Posterior cingulate gyrus (tissue), 11 donors: ENCODE measurements at regions of chr2 and their contacts with region 1.

Region 1: DNA sequence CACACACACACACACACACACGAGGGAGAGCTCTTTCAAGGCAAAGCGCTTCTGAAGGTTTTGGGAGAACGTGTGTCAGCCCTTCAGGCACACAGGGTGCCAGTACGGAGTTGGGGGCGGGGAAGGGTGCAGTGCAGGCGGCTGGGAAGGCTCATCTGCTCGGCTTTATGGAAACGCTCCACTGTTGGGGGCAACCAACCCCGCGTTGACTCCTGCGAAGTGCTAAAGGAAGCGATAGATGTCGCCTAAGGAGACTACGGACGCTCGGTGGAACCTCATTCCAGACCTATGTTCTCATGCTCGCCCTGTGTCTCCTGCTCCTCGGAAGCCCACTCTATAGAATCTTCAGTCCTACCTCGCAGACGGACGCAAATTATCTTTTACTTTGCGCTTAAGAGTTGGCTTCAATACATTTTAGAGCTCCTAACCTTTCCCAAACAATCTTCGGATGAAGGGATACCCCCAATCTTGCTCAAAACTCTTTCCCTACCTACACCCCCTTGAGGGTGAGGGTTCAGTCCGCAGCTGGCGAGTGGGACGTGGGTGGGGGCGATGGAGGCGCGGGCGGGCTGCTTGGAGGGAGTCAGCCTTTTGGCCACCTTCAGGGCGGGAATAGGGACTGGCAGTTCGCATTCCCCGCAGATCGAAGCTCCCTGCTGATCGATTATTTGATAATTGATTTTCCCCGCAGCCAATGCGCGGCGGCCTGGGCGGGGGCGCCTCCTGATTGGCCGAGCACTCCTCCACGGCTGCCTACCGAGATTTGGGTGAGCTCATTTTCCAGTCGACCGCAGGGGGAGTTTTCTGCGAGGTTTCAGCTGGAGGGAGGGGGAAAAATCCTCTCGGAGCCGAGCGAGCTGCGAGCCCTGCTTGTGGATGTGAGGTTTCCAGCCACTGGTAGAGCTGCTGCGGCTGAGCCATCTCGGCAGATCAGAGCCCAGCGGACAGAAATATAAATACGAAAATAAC is 1.8 kb upstream of the MEIS1 start:
- DNase-seq: peak; percentile 74 to 98 (median 88)

Region 2: DNA sequence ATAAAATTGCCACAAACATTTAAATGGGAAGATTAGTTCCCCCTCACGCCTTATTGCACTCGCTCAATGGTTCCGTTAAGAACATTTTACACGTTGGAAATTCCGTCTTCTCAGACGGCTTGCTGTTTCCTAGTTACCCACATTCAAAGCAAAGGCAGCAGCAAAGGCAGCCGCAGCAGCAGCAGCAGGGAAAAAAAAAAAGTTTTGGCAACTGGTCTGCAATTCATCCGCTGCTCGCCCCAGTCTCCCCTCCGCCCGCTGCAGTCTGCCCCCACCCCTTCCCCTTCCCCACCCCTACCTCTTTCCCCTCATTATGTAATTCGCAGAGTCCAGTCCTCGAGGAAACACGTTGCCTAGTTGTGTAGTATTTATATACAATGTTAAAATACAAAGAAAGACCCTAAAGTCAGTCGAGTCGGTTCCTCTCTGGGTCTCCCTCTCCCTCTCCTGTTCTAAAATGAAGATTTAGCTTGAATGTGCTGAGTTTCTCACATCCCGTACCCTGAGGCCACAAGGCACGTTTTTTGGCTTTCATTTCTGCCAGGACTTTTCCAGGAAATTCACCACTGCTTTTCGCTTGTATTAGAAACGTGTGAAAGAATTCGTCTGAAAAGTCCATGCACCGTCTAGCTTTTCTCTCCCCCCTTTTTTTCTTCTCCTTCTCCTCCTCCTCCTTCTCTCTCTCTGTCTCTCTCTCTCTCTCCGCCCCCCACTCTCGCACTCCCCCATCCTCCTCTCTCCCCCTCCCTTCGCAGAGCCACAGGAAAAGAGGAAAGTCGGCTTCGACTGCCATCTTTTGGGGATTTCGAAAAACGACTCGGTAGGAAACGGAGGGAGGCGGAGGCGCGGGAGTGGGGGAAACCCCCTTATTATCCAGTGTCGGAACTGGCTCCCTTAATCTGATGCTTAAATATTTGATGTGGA is 141.9 kb after region 1 on chr2:
- intact Hi-C with region 1: loop called (anchors 1 kb)
- DNase-seq: peak in 8 of 10 donors; percentile 27 to 86 (median 49)

Region 3: DNA sequence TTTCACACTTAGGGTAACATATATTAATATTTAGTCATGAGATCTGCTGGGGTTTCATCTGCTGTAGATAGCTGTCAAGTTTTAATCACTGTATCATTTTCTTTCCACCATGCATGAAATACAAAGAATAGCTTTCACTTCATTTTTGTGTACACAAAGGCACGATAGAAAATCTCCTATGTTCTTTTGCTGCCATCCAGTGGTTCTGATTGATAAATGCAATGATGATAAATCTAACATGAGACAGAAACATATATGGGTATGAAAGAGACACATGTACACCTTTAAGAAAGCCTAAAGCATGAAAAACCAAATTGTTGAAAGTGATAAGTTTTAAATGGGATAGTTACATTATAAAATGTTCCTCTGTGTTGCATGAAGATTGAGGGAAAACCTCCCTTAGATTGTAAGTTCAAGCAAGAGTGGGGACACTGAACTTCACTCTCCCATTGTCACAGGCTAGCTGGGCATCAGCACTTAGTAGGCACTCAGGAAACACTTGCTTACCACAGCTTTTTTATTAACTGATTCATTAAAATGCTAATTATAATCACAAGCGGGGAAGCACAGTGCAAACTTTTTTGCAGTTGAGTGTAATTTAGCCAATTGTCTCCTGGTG is 1598.6 kb after region 1 on chr2:
- intact Hi-C with region 1: loop called (anchors 5 kb)
- DNase-seq: no peak